A549 (cell line): ENCODE measurements at regions of chr9 and their contacts with region 1.

Region 1: DNA sequence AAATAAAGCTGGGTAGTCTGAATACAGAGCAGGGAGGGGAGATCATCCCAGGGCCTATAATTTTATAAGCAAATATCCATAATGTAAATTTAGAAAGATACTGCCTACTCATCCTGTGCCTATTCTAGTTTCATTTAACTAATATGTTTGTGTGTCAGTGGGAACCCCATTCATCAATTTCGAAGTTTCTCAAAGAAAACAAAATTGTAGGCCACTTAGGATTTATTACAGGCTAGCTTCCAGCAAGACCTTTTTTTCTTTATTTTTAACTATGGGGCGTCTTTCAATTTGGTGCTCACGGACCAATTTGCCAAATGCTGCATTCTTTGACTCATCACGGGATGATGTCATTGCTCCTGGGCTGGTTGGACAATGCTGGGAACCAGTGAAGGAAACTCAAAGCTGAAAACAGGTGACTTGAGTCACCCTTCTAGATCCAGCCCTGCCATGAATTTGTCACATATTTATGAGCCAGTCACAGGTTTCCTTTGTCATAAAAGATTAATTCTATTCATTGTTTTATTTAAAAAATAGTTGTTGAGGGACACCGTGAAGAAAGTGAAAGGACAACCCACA is 13.4 kb downstream of the PCSK5 start:
- DNase-seq: peak; percentile 62 to 72
- ATAC-seq: peak; percentile 68 to 81; a peak in 5 of 6 replicates
- H3K4me3 ChIP-seq: peak overlapping the region; percentile 13; the same call in 1 of the 3 replicates
- H3K27ac ChIP-seq: peak overlapping the region in 1 of 2 experiments; percentile 17; a peak in 1 of 6 replicates
- H3K4me1 ChIP-seq: peaks cover 17% of the 10 kb centered on the region; the same call in 2 of the 3 replicates
- CTCF ChIP-seq: no peak
- EP300 ChIP-seq: no peak
- POLR2A ChIP-seq: no peak
- RAD21 ChIP-seq: no peak

Region 2: DNA sequence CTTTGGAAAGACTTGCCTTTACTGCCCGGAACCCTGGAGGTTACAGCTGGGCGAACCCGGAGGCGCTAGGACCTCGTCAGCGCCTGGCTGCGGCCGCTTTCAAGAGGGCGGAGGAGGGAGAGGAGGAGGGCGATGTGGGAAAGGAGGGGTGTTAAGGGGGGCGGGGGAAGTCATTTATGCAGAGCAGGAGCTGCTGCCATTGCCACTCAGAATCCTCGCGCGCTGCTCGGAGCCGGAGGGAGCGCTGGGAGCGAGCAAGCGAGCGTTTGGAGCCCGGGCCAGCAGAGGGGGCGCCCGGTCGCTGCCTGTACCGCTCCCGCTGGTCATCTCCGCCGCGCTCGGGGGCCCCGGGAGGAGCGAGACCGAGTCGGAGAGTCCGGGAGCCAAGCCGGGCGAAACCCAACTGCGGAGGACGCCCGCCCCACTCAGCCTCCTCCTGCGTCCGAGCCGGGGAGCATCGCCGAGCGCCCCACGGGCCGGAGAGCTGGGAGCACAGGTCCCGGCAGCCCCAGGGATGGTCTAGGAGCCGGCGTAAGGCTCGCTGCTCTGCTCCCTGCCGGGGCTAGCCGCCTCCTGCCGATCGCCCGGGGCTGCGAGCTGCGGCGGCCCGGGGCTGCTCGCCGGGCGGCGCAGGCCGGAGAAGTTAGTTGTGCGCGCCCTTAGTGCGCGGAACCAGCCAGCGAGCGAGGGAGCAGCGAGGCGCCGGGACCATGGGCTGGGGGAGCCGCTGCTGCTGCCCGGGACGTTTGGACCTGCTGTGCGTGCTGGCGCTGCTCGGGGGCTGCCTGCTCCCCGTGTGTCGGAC is 13.2 kb before region 1 on chr9 and contains the start of gene PCSK5:
- CTCF ChIA-PET with region 1: no interaction called
- POLR2A ChIA-PET with region 1: interaction called, 10 read pairs
- DNase-seq: peak; percentile 77 to 90
- ATAC-seq: peak; percentile 88 to 91
- H3K4me3 ChIP-seq: peak within 1 kb of the TSS; percentile 51
- H3K27ac ChIP-seq: peak within 1 kb of the TSS; percentile 61 to 84
- H3K4me1 ChIP-seq: peaks cover 21% of the 10 kb centered on the region; the same call in 2 of the 3 replicates
- CTCF ChIP-seq: peak; percentile 15; the same call in 1 of the 3 replicates
- EP300 ChIP-seq: no peak
- POLR2A ChIP-seq: peak; percentile 92
- RAD21 ChIP-seq: no peak; a peak in 2 of 5 replicates
- polyA plus RNA-seq, gene PCSK5: 6.7 and 7.0 TPM in 2 replicates

Region 3: DNA sequence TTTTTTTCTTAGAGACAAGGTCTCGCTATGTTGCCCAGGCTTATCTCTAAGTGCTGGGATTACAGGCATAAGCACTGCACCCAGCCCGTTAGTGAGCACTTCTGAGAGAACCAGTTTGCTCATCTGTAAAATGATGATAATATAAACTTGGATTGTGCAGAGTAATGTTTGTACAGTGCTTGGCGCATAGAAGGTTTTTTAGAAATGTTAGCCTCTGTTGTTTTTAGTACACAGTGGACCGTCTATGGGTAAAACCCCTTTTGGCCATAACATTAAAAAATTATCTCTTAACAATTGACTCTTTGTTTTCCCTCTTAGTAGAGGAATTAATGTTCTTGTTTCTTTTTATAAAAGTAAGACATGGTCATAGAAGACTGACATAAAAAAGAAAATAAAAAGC is 188.7 kb after region 1 on chr9:
- CTCF ChIA-PET with region 1: no interaction called
- POLR2A ChIA-PET with region 1: no interaction called
- DNase-seq: no peak
- ATAC-seq: no peak
- H3K4me3 ChIP-seq: no peak overlapping the region
- H3K27ac ChIP-seq: no peak overlapping the region
- H3K4me1 ChIP-seq: no peaks in the 10 kb centered on the region
- CTCF ChIP-seq: no peak
- EP300 ChIP-seq: no peak
- POLR2A ChIP-seq: no peak
- RAD21 ChIP-seq: no peak